Mammary epithelial cell (primary cell): ENCODE measurements at regions of chr20 and their contacts with region 1.

Region 1: GRCh38 chr20:22763257-22763906 is 179.0 kb upstream of the FOXA2 start:
- DNase-seq: peak; percentile 91
- H3K4me3 ChIP-seq: peak overlapping the region in 2 of 3 experiments; percentile 8 to 36
- H3K27ac ChIP-seq: peak overlapping the region; percentile 98
- H3K4me1 ChIP-seq: peaks cover 44% of the 10 kb centered on the region
- H3K27me3 ChIP-seq: no peaks in the 10 kb centered on the region
- CTCF ChIP-seq: no peak

Region 2: GRCh38 chr20:22274330-22274729 is 489.1 kb before region 1 on chr20:
- CTCF ChIA-PET with region 1: no interaction called
- dilution Hi-C with region 1: no loop called
- in situ Hi-C with region 1: no loop called
- intact Hi-C with region 1: no loop called
- DNase-seq: no peak
- H3K4me3 ChIP-seq: no peak overlapping the region
- H3K27ac ChIP-seq: no peak overlapping the region
- H3K4me1 ChIP-seq: no peaks in the 10 kb centered on the region
- H3K27me3 ChIP-seq: no peaks in the 10 kb centered on the region
- CTCF ChIP-seq: no peak

Region 3: GRCh38 chr20:22723648-22724047 is 39.7 kb before region 1 on chr20:
- CTCF ChIA-PET with region 1: interaction called, 3 read pairs
- dilution Hi-C with region 1: loop called (anchors 5 kb)
- in situ Hi-C with region 1: no loop called
- intact Hi-C with region 1: loop called (anchors 2 kb)
- DNase-seq: no peak
- H3K4me3 ChIP-seq: no peak overlapping the region
- H3K27ac ChIP-seq: no peak overlapping the region
- H3K4me1 ChIP-seq: peaks cover 7% of the 10 kb centered on the region
- H3K27me3 ChIP-seq: no peaks in the 10 kb centered on the region
- CTCF ChIP-seq: peak in 1 of 2 donors; percentile 1

Region 4: GRCh38 chr20:22775671-22776139 is 12.3 kb after region 1 on chr20:
- CTCF ChIA-PET with region 1: no interaction called
- dilution Hi-C with region 1: no loop called
- in situ Hi-C with region 1: no loop called
- intact Hi-C with region 1: loop called (anchors 1 kb)
- DNase-seq: peak; percentile 88
- H3K4me3 ChIP-seq: no peak overlapping the region
- H3K27ac ChIP-seq: peak overlapping the region; percentile 80
- H3K4me1 ChIP-seq: peaks cover 38% of the 10 kb centered on the region
- H3K27me3 ChIP-seq: no peaks in the 10 kb centered on the region
- CTCF ChIP-seq: no peak

Region 5: GRCh38 chr20:22805219-22805618 is 41.8 kb after region 1 on chr20:
- CTCF ChIA-PET with region 1: no interaction called
- dilution Hi-C with region 1: no loop called
- in situ Hi-C with region 1: no loop called
- intact Hi-C with region 1: loop called (anchors 1 kb)
- DNase-seq: peak; percentile 89
- H3K4me3 ChIP-seq: no peak overlapping the region
- H3K27ac ChIP-seq: no peak overlapping the region
- H3K4me1 ChIP-seq: peaks cover 10% of the 10 kb centered on the region
- H3K27me3 ChIP-seq: no peaks in the 10 kb centered on the region
- CTCF ChIP-seq: no peak

Region 6: GRCh38 chr20:23350196-23350903 is 587.0 kb after region 1 on chr20 and contains the start of gene NXT1:
- CTCF ChIA-PET with region 1: no interaction called
- dilution Hi-C with region 1: no loop called
- in situ Hi-C with region 1: no loop called
- intact Hi-C with region 1: loop called (anchors 5 kb)
- DNase-seq: peak; percentile 99
- H3K4me3 ChIP-seq: peak within 1 kb of the TSS; percentile 74 to 89 (median 78)
- H3K27ac ChIP-seq: peak within 1 kb of the TSS; percentile 81
- H3K4me1 ChIP-seq: peaks cover 13% of the 10 kb centered on the region
- H3K27me3 ChIP-seq: no peaks in the 10 kb centered on the region
- CTCF ChIP-seq: peak in 1 of 2 donors; percentile 0
- total RNA-seq, gene NXT1: 22.0 to 28.5 TPM